Heart left ventricle (tissue), 16 donors: ENCODE measurements at regions of chr15 and their contacts with region 1.

Region 1: DNA sequence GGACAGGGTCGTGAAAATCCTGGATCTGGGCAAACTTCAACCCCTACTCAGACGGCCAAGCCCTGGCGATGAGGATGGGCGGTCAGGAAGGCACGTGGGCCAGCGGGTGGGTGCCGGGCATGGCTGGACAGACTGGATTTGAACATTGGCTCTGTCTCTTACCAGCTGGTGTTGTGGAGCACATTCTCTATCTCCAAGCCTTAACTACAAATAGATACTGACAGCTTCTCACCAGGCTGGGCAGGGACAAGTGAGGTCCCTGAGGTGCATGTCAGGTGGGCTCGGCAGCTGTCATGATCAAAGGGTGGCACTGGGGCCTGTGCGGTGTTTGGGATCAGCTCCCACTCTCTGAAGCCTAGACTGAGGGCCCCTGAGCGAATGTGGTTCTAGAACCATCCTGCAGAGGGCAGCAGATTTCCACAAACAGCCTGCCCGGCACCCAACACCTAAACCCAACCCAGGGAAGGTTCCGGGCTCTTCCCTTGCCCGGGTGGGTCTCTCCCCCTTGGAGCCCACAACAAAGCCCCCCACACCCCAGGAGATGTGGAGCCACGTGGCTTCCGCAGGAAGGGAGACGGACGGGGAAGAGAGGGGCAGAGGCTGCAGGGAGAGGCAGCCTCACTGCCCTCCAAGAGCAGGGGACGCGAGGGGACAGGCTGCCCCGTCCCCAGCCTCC is 58.4 kb downstream of the RGMA start:
- DNase-seq: peak in 4 of 5 donors; percentile 67 to 75 (median 68)
- ATAC-seq: peak; percentile 34 to 72 (median 63)
- H3K4me3 ChIP-seq: no peak overlapping the region
- H3K27ac ChIP-seq: peak overlapping the region in 10 of 12 donors; percentile 25 to 96 (median 83)
- H3K4me1 ChIP-seq: peaks cover 0 to 55% (median 44%) of the 10 kb centered on the region in 12 donors
- H3K27me3 ChIP-seq: no peaks in the 10 kb centered on the region
- CTCF ChIP-seq: peak; percentile 79 to 92 (median 86)
- POLR2A ChIP-seq: no peak

Region 2: GRCh38 chr15:93072411-93073394 is 42.1 kb after region 1 on chr15:
- intact Hi-C with region 1: loop called in 1 of 10 experiments (anchors 5 kb)
- DNase-seq: peak; percentile 85 to 91 (median 89)
- ATAC-seq: peak; percentile 61 to 96 (median 86)
- H3K4me3 ChIP-seq: peak overlapping the region; percentile 59 to 77 (median 66)
- H3K27ac ChIP-seq: peak overlapping the region; percentile 50 to 91 (median 80)
- H3K4me1 ChIP-seq: peaks cover 0 to 40% (median 17%) of the 10 kb centered on the region in 12 donors
- H3K27me3 ChIP-seq: peaks cover 0 to 44% (median 0%) of the 10 kb centered on the region in 9 donors
- CTCF ChIP-seq: peak in 6 of 12 donors; percentile 9 to 41 (median 19)
- POLR2A ChIP-seq: peak in 1 of 2 donors; percentile 62

Region 3: GRCh38 chr15:93485438-93486327 is 455.1 kb after region 1 on chr15:
- intact Hi-C with region 1: loop called in 2 of 10 experiments (anchors 10 kb)
- DNase-seq: peak in 4 of 5 donors; percentile 58 to 63 (median 62)
- ATAC-seq: peak; percentile 85 to 91 (median 89)
- H3K4me3 ChIP-seq: no peak overlapping the region
- H3K27ac ChIP-seq: peak overlapping the region in 11 of 12 donors; percentile 4 to 87 (median 63)
- H3K4me1 ChIP-seq: peaks cover 0 to 20% (median 5%) of the 10 kb centered on the region in 12 donors
- H3K27me3 ChIP-seq: no peaks in the 10 kb centered on the region
- CTCF ChIP-seq: peak in 4 of 12 donors; percentile 12 to 44 (median 31)
- POLR2A ChIP-seq: no peak

Region 4: DNA sequence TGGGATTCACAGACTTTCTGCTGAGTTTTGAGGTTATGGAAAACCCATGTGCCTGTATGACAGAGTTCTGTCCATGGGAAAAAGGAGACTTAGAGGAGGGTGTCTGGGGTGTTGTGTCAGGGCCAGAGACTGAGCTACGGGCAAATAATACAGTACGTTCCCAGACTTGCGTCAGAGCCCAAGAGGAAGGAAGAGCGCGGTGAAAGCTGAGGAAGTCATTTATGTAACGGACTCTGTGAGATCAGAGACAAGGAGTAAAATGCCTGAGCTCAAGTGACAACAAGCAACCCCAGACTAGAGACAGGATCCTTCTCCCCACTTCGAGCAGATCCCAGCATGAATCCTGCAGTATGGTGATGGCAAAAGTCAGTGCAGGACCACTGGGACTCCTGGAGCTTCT is 832.2 kb after region 1 on chr15:
- intact Hi-C with region 1: loop called in 1 of 10 experiments (anchors 10 kb)
- DNase-seq: peak in 3 of 5 donors; percentile 29 to 50 (median 38)
- ATAC-seq: peak; percentile 28 to 82 (median 51)
- H3K4me3 ChIP-seq: peak overlapping the region in 1 of 12 donors; percentile 6
- H3K27ac ChIP-seq: peak overlapping the region in 4 of 12 donors; percentile 38 to 82 (median 65)
- H3K4me1 ChIP-seq: peaks cover 0 to 35% (median 0%) of the 10 kb centered on the region in 12 donors
- H3K27me3 ChIP-seq: no peaks in the 10 kb centered on the region
- CTCF ChIP-seq: no peak
- POLR2A ChIP-seq: no peak

Region 5: GRCh38 chr15:93997084-93997918 is 966.7 kb after region 1 on chr15:
- intact Hi-C with region 1: loop called in 1 of 10 experiments (anchors 10 kb)
- DNase-seq: no peak
- ATAC-seq: no peak
- H3K4me3 ChIP-seq: no peak overlapping the region
- H3K27ac ChIP-seq: no peak overlapping the region
- H3K4me1 ChIP-seq: peaks cover 0 to 12% (median 0%) of the 10 kb centered on the region in 12 donors
- H3K27me3 ChIP-seq: no peaks in the 10 kb centered on the region
- CTCF ChIP-seq: peak; percentile 38 to 75 (median 56)
- POLR2A ChIP-seq: no peak

Region 6: DNA sequence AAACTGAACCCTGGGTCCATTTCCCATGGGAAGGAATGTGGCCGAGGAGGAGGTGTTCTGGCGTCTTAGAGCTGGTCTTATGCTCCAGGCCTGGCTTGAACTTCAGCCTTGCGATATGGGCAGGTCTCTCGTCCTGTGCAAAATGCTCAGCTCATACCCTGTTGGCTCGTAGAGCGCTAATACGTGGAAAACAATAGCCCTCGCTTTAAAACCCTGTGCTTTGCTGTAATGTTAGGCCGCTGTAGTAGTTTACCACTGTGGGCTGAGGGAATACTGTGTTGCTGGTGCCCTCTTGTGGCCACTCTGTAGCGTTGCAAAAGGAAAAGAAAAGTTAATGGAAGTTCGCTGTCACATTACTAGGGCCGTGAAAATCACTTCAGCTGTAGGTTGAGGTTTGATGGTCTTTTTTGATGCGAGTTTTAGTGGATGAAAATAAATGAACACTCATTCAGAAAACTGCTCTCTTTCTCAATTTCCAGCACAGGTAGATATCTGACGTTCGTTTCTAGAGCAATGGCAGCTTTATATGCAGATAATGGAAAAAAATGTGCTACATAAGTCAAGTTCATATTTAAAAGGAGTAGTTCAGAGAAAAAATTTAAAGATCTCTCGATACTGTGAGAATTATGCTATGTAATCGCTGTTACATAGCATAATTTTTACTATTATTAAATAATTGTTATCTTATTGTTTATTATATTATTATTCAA is 1293.7 kb after region 1 on chr15:
- intact Hi-C with region 1: loop called in 7 of 10 experiments (anchors 5 to 10 kb)
- DNase-seq: peak in 2 of 5 donors; percentile 20 to 48
- ATAC-seq: peak; percentile 81 to 92 (median 86)
- H3K4me3 ChIP-seq: no peak overlapping the region
- H3K27ac ChIP-seq: no peak overlapping the region
- H3K4me1 ChIP-seq: peaks cover 0 to 14% (median 0%) of the 10 kb centered on the region in 12 donors
- H3K27me3 ChIP-seq: no peaks in the 10 kb centered on the region
- CTCF ChIP-seq: peak; percentile 75 to 97 (median 89)
- POLR2A ChIP-seq: no peak